ENCODE measurements at regions of chr2 and their contacts with region 1.

Region 1: GRCh38 chr2:17323697-17324096 is 194.5 kb downstream of the RAD51AP2 start:
- DNase-seq: no peak
- ATAC-seq: no peak
- H3K4me3 ChIP-seq: no peak overlapping the region
- H3K27ac ChIP-seq: no peak overlapping the region
- H3K4me1 ChIP-seq: no peaks in the 10 kb centered on the region
- H3K27me3 ChIP-seq: no peaks in the 10 kb centered on the region
- CTCF ChIP-seq: no peak

Region 2: GRCh38 chr2:17258861-17259260 is 64.8 kb before region 1 on chr2:
- intact Hi-C with region 1: loop called in 1 of 10 experiments (anchors 2 kb)
- DNase-seq: no peak
- ATAC-seq: no peak
- H3K4me3 ChIP-seq: no peak overlapping the region
- H3K27ac ChIP-seq: no peak overlapping the region
- H3K4me1 ChIP-seq: no peaks in the 10 kb centered on the region
- H3K27me3 ChIP-seq: peaks cover 0 to 5% (median 0%) of the 10 kb centered on the region in 7 donors
- CTCF ChIP-seq: no peak